A673 (cell line): ENCODE measurements at regions of chr5 and their contacts with region 1.

Region 1: GRCh38 chr5:38193015-38193581 is 65.3 kb upstream of the EGFLAM start:
- DNase-seq: peak; percentile 81
- H3K4me3 ChIP-seq: no peak overlapping the region
- H3K27ac ChIP-seq: no peak overlapping the region
- H3K4me1 ChIP-seq: no peaks in the 10 kb centered on the region
- H3K27me3 ChIP-seq: no peaks in the 10 kb centered on the region
- CTCF ChIP-seq: peak; percentile 94

Region 2: DNA sequence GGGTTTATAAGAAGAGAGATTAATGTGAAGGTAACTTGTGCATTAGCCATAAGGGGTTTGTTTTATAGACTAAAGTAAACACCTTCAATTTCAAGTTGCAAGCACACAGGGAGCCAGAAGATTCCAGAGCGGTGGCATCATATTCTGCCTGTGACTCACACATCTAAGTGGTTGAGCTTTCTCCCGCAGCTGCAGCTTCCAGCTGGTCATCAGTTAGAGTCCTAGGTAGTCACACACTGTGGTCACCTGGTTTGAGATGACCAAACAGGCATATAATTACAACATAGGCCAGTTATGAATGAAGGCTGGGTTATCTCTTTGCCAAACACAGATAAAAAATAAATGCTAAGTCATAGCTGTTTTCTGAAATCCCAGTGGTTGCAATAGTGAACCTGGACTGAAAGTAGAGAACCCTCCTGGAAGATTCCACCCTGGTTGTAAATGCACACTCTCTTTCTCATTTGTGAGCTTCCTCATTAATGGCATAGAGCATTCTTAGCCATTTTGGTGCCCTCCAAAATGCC is 524.5 kb before region 1 on chr5:
- CTCF ChIA-PET with region 1: no interaction called
- POLR2A ChIA-PET with region 1: no interaction called
- intact Hi-C with region 1: loop called (anchors 10 kb)
- DNase-seq: peak; percentile 72
- H3K4me3 ChIP-seq: no peak overlapping the region
- H3K27ac ChIP-seq: no peak overlapping the region
- H3K4me1 ChIP-seq: peaks cover 29% of the 10 kb centered on the region
- H3K27me3 ChIP-seq: no peaks in the 10 kb centered on the region
- CTCF ChIP-seq: no peak

Region 3: DNA sequence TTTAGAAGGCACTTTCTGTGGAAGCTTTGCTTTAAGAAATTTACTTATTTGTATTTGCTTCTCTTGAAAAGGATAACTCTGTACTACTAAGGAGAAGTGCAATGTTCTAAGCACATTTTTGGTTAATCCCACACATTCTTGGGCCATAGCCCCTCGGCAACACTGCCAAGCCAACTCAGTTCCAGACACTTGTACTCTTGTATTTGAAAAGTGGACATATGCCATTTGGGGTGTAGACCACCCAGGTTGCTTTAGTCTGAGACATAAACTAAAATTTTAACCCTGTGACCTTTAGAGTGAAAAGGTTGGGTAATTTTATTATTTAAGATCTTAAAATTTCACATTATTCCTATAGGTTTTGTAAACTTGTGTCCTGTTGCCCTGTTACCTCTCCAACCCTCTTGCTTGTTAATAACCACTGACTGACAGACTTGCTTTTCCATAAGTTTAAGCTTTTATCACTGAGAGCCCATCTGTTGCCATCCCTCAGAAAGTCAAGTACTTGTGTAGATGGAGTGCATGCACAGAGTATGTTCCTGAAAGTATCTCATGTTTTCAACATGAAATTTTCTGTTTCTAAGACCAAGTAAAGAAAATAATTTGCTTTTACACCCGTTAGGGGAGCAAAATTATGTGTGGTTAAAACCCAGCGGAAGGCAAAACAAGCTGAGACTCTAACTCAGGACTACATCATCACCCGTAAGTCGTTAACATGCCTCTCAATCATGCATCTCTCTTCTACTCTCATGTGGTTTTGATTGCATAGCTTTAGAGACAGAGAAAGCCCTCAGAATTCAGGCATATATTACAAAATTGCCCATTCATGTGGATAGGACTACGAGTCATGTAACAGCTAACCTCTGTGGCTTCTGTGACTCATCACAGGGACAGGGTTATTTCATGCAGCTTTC is 470.6 kb before region 1 on chr5:
- CTCF ChIA-PET with region 1: interaction called, 5 read pairs
- POLR2A ChIA-PET with region 1: no interaction called
- intact Hi-C with region 1: loop called (anchors 5 kb)
- DNase-seq: peak; percentile 85
- H3K4me3 ChIP-seq: peak overlapping the region; percentile 21
- H3K27ac ChIP-seq: peak overlapping the region; percentile 93
- H3K4me1 ChIP-seq: peaks cover 75% of the 10 kb centered on the region
- H3K27me3 ChIP-seq: no peaks in the 10 kb centered on the region
- CTCF ChIP-seq: no peak

Region 4: DNA sequence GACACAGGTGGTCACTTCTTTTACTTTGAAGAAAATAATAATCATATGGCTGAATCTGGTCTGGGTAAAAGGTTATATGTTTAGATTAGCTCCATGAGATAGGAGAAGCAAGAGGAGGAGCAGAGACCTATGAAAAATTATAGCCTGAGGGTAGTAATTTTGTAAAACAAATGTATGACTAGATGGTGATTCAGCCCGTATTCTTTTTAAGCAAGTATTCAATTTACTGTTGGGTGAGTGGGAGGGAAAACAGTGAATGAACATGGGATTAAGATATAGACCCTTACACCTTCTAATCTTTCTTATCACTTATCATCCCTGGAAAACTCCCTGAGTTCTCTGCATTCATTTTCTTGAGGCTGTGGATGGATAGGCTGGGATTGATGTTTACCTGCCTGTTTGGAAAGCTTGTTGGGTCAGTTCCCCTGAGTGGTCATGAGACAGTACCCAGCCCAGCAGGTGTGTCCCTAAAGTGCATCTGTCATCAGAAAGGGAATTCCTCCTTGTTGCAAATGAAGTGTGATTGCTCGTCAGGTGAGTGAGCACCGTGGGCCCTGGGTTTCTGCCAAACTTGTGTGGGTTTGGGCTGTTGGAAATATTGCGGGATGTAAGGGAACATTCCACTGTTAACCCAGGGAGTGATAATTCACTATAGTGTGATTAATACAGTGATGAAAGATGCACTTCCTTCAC is 252.0 kb before region 1 on chr5:
- CTCF ChIA-PET with region 1: no interaction called
- POLR2A ChIA-PET with region 1: no interaction called
- intact Hi-C with region 1: no loop called
- DNase-seq: no peak
- H3K4me3 ChIP-seq: no peak overlapping the region
- H3K27ac ChIP-seq: no peak overlapping the region
- H3K4me1 ChIP-seq: no peaks in the 10 kb centered on the region
- H3K27me3 ChIP-seq: no peaks in the 10 kb centered on the region
- CTCF ChIP-seq: no peak